GM12878 (cell line): ENCODE measurements at regions of chr1 and their contacts with region 1.

Region 1: DNA sequence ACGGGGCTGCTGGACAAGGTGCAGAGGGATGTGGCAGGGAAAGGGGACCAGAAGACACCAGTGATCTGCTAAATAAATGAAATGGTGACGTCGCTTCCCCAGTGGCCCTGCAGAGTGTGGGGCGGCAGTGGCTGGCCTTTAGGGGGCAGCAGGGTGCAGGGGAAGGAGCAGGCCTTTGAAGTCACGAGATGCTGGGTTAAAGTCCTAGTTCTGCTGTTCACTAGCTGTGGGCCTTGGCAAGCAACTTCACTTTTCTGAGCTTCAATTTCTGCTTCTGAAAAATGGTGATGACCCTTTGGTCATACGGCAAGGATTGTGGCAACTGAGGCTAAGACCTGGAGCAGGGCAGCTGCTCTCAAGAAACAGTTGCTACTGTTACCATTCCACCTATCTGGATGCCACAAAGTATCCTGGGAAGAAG is 9.2 kb upstream of the GALE start:
- DNase-seq: peak; percentile 34
- ATAC-seq: peak; percentile 95
- H3K4me3 ChIP-seq: no peak overlapping the region
- H3K27ac ChIP-seq: no peak overlapping the region
- H3K4me1 ChIP-seq: peaks cover 35% of the 10 kb centered on the region
- H3K27me3 ChIP-seq: no peaks in the 10 kb centered on the region
- CTCF ChIP-seq: peak; percentile 95 to 98 (median 97)
- EP300 ChIP-seq: no peak
- POLR2A ChIP-seq: no peak
- RAD21 ChIP-seq: peak; percentile 83

Region 2: GRCh38 chr1:23611608-23612327 is 198.0 kb before region 1 on chr1:
- CTCF ChIA-PET with region 1: no interaction called
- POLR2A ChIA-PET with region 1: no interaction called
- RAD21 ChIA-PET with region 1: no interaction called
- SMC1A ChIA-PET with region 1: no interaction called
- in situ Hi-C with region 1: no loop called
- intact Hi-C with region 1: no loop called
- DNase-seq: no peak
- ATAC-seq: peak; percentile 59
- H3K4me3 ChIP-seq: no peak overlapping the region
- H3K27ac ChIP-seq: peak overlapping the region; percentile 80
- H3K4me1 ChIP-seq: peaks cover 44% of the 10 kb centered on the region
- H3K27me3 ChIP-seq: no peaks in the 10 kb centered on the region
- CTCF ChIP-seq: no peak
- EP300 ChIP-seq: no peak
- POLR2A ChIP-seq: no peak
- RAD21 ChIP-seq: no peak

Region 3: GRCh38 chr1:23772049-23772853 is 37.5 kb before region 1 on chr1:
- CTCF ChIA-PET with region 1: interaction called, 87 read pairs
- POLR2A ChIA-PET with region 1: interaction called, 3 read pairs
- RAD21 ChIA-PET with region 1: interaction called, 26 read pairs
- SMC1A ChIA-PET with region 1: interaction called, 27 read pairs
- in situ Hi-C with region 1: no loop called
- intact Hi-C with region 1: no loop called
- DNase-seq: peak; percentile 27
- ATAC-seq: peak; percentile 99
- H3K4me3 ChIP-seq: no peak overlapping the region
- H3K27ac ChIP-seq: no peak overlapping the region
- H3K4me1 ChIP-seq: peaks cover 12% of the 10 kb centered on the region
- H3K27me3 ChIP-seq: no peaks in the 10 kb centered on the region
- CTCF ChIP-seq: peak; percentile 97 to 98 (median 98); a peak in 5 of 6 replicates
- EP300 ChIP-seq: no peak
- POLR2A ChIP-seq: no peak
- RAD21 ChIP-seq: peak; percentile 91

Region 4: DNA sequence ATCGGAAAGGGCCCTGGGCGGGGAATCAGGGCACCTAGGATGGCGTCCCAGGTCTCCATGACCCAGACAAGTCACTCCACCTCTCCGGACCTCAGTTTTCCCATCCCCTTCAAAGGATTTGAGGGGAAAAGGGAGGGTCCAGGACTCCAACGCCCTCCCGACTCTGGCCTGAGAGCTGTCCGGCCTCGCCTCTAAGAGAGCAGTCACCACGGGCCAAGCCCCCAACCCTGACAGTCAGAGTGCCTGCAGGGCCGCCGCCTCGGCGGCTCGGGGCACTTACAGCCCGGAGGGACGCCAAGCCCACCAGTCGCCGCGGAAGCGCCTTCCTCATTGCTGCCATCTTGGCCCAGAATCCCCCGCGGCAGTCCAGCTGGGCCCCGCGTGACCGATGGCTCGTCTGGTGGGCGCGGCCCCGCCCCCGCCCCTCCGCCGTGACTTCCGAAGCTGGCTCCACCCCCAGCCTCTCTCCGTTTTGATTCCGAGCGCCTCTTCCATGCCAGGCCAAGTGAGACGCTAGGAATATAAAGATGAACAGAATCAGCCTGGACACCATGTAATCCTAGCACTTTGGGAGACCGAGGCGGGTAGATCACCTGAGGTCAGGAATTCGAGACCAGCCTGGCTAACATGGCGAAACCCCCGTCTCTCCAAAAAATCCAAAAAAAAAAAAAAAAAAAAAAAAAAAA is 15.5 kb after region 1 on chr1 and contains the start of gene HMGCL:
- CTCF ChIA-PET with region 1: interaction called, 74 read pairs
- POLR2A ChIA-PET with region 1: interaction called, 13 read pairs
- RAD21 ChIA-PET with region 1: interaction called, 16 read pairs
- SMC1A ChIA-PET with region 1: interaction called, 32 read pairs
- in situ Hi-C with region 1: no loop called
- intact Hi-C with region 1: no loop called
- DNase-seq: peak; percentile 55
- ATAC-seq: peak; percentile 99
- H3K4me3 ChIP-seq: peak within 1 kb of the TSS; percentile 83
- H3K27ac ChIP-seq: peak within 1 kb of the TSS; percentile 82
- H3K4me1 ChIP-seq: no peaks in the 10 kb centered on the region
- H3K27me3 ChIP-seq: no peaks in the 10 kb centered on the region
- CTCF ChIP-seq: no peak
- EP300 ChIP-seq: no peak
- POLR2A ChIP-seq: peak; percentile 99
- RAD21 ChIP-seq: no peak
- polyA plus RNA-seq, gene HMGCL: 75.9 to 127 TPM

Region 5: GRCh38 chr1:23854568-23854967 is 44.8 kb after region 1 on chr1:
- CTCF ChIA-PET with region 1: interaction called, 44 read pairs
- POLR2A ChIA-PET with region 1: no interaction called
- RAD21 ChIA-PET with region 1: interaction called, 15 read pairs
- SMC1A ChIA-PET with region 1: interaction called, 29 read pairs
- in situ Hi-C with region 1: no loop called
- intact Hi-C with region 1: loop called (anchors 1 kb)
- DNase-seq: no peak
- ATAC-seq: peak; percentile 68
- H3K4me3 ChIP-seq: no peak overlapping the region
- H3K27ac ChIP-seq: no peak overlapping the region
- H3K4me1 ChIP-seq: no peaks in the 10 kb centered on the region
- H3K27me3 ChIP-seq: no peaks in the 10 kb centered on the region
- CTCF ChIP-seq: peak in 2 of 3 experiments; percentile 20 to 45; a peak in 3 of 6 replicates
- EP300 ChIP-seq: no peak
- POLR2A ChIP-seq: no peak
- RAD21 ChIP-seq: peak; percentile 35

Region 6: GRCh38 chr1:23889074-23889473 is 79.3 kb after region 1 on chr1:
- CTCF ChIA-PET with region 1: interaction called, 19 read pairs
- POLR2A ChIA-PET with region 1: no interaction called
- RAD21 ChIA-PET with region 1: interaction called, 5 read pairs
- SMC1A ChIA-PET with region 1: interaction called, 4 read pairs
- in situ Hi-C with region 1: no loop called
- intact Hi-C with region 1: no loop called
- DNase-seq: peak; percentile 50
- ATAC-seq: peak; percentile 92
- H3K4me3 ChIP-seq: peak overlapping the region; percentile 45; the same call in 1 of the 2 replicates
- H3K27ac ChIP-seq: peak overlapping the region; percentile 85
- H3K4me1 ChIP-seq: peaks cover 46% of the 10 kb centered on the region
- H3K27me3 ChIP-seq: no peaks in the 10 kb centered on the region
- CTCF ChIP-seq: no peak
- EP300 ChIP-seq: no peak
- POLR2A ChIP-seq: 0 out of 2 replicates have a peak, but pooled peaks have one; percentile 16
- RAD21 ChIP-seq: no peak

Region 7: GRCh38 chr1:23916209-23917131 is 106.7 kb after region 1 on chr1:
- CTCF ChIA-PET with region 1: interaction called, 220 read pairs
- POLR2A ChIA-PET with region 1: interaction called, 14 read pairs
- RAD21 ChIA-PET with region 1: interaction called, 175 read pairs
- SMC1A ChIA-PET with region 1: interaction called, 117 read pairs
- in situ Hi-C with region 1: loop called (anchors 5 kb)
- intact Hi-C with region 1: loop called (anchors 1 kb)
- DNase-seq: peak; percentile 53
- ATAC-seq: peak; percentile 90
- H3K4me3 ChIP-seq: no peak overlapping the region
- H3K27ac ChIP-seq: peak overlapping the region; percentile 71
- H3K4me1 ChIP-seq: peaks cover 31% of the 10 kb centered on the region
- H3K27me3 ChIP-seq: no peaks in the 10 kb centered on the region
- CTCF ChIP-seq: peak; percentile 86 to 94 (median 88)
- EP300 ChIP-seq: no peak
- POLR2A ChIP-seq: no peak
- RAD21 ChIP-seq: peak; percentile 96

Region 8: DNA sequence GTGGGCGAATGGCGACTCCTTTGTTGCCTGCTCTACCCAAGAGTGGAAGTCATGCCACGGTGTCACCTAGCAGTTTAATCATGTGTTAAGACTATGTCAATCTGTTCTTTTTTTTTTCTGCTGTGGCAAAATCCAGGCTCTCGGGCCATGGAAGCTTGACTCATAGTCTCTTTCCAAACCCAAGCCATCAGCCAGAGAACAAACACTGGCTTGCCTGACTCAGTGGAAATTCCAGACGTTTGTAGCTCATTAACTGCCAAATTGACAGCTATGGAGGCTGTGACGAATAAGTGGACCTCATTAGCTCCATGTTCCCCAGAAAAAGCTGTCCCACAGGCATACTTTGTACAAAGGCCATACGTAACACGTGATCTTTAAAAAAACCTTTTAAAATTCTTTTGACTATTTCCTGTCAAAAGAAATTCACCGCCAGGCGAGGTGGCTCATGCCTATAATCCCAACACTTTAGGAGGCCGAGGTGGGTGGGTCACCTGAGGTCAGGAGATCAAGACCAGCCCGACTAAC is 141.9 kb after region 1 on chr1:
- CTCF ChIA-PET with region 1: interaction called, 11 read pairs
- POLR2A ChIA-PET with region 1: no interaction called
- RAD21 ChIA-PET with region 1: interaction called, 9 read pairs
- SMC1A ChIA-PET with region 1: interaction called, 6 read pairs
- in situ Hi-C with region 1: no loop called
- intact Hi-C with region 1: no loop called
- DNase-seq: no peak
- ATAC-seq: no peak
- H3K4me3 ChIP-seq: no peak overlapping the region
- H3K27ac ChIP-seq: no peak overlapping the region
- H3K4me1 ChIP-seq: peaks cover 13% of the 10 kb centered on the region
- H3K27me3 ChIP-seq: no peaks in the 10 kb centered on the region
- CTCF ChIP-seq: no peak
- EP300 ChIP-seq: no peak
- POLR2A ChIP-seq: no peak
- RAD21 ChIP-seq: no peak

Region 9: GRCh38 chr1:24126018-24126671 is 316.4 kb after region 1 on chr1:
- CTCF ChIA-PET with region 1: no interaction called
- POLR2A ChIA-PET with region 1: no interaction called
- RAD21 ChIA-PET with region 1: no interaction called
- SMC1A ChIA-PET with region 1: no interaction called
- in situ Hi-C with region 1: no loop called
- intact Hi-C with region 1: no loop called
- DNase-seq: no peak
- ATAC-seq: no peak
- H3K4me3 ChIP-seq: no peak overlapping the region
- H3K27ac ChIP-seq: no peak overlapping the region
- H3K4me1 ChIP-seq: no peaks in the 10 kb centered on the region; the same call in 1 of the 2 replicates
- H3K27me3 ChIP-seq: no peaks in the 10 kb centered on the region; a peak in 2 of 4 replicates
- CTCF ChIP-seq: no peak
- EP300 ChIP-seq: no peak
- POLR2A ChIP-seq: no peak
- RAD21 ChIP-seq: no peak